Motor neuron (in vitro differentiated cells): ENCODE measurements at regions of chr12 and their contacts with region 1.

Region 1: DNA sequence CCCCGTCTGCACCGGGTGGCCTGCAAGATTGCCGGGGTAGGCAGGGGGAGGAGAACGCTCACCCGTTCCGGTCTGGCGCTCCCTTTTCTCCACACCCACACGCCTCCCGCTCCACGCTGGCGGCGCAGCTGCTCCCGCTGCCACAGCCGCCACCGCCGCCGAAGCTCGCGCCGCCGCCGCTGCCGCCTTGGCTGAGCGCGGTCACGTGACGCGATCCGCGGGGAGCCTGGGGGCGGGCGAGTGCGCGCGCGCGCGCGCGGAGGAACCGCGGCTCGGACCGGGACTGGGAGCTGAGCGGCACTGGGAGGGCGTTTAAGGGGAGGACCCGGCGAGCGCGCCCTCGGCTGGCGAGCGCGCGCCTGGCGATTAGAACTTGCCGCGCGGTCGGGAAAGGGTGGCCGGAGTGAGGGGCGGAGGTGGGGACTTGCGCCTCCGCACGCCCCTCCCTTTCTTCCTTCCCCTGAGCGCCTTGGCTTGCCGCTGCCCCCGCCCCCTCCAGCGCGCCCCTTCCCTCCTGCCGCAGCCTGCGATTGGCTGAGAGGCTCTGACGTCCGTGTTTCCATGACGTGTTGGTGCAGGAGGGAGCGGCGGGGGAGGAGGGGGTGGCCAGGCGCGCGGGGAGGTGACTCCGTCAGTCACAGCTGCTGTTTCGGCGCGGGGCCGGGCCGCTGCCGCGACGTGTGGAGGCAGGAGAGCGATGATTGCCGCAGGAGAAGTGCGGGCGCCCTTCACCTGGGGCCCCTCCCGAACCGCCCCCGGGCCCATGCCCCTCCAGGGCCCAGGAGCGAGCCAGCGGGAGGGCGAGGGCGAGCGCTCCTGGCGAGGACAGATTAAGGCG is 738 bp upstream of the ATP2B1 start:
- ATAC-seq: peak; percentile 68 to 85 (median 82)
- H3K4me3 ChIP-seq: peak overlapping the region; percentile 68 to 86 (median 75)
- H3K27ac ChIP-seq: peak overlapping the region; percentile 95 to 96
- H3K4me1 ChIP-seq: peaks cover 0 to 7% of the 10 kb centered on the region in 2 donors

Region 2: DNA sequence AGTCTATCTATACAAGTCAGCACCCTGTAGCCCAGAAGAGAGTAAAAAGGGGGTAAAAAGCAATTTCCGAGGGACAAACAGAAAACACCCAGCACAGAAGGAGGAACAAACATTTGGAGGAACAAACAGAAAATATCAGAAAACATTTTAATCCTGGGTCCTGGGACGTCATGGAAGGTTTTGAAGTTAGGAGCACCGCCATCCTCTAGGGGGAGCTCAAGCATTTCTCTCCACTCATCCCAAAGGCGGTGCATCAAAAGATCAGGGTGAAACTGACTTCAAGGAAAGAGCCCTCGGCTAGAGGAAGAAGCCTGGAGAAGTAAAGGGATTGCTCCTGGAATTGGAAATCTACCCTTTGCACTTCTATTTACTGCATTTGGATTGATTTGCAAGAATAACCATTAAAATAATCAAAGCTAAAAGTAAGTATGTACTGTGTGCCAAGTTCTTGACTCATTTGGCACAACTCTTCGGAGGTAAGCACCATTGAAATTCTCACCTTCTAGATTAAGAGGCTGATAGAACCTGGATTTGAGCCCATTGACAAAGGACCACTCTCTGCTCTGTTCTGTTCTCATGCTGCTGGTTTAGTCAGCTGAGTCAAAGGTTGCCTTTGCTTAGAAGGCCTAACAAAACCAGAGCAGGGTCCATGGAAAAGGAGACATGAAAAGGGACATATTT is 166.3 kb before region 1 on chr12:
- in situ Hi-C with region 1: loop called in 2 of 9 experiments (anchors 10 to 25 kb)
- ATAC-seq: peak; percentile 60 to 94 (median 76)
- H3K4me3 ChIP-seq: no peak overlapping the region
- H3K27ac ChIP-seq: no peak overlapping the region
- H3K4me1 ChIP-seq: peaks cover 0 to 6% of the 10 kb centered on the region in 2 donors

Region 3: GRCh38 chr12:90235642-90236041 is 526.3 kb after region 1 on chr12:
- in situ Hi-C with region 1: loop called in 1 of 9 experiments (anchors 25 kb)
- ATAC-seq: peak in 2 of 8 experiments; percentile 53 to 81
- H3K4me3 ChIP-seq: no peak overlapping the region
- H3K27ac ChIP-seq: no peak overlapping the region
- H3K4me1 ChIP-seq: no peaks in the 10 kb centered on the region